RWPE1 (cell line): ENCODE measurements at regions of chr20 and their contacts with region 1.

Region 1: DNA sequence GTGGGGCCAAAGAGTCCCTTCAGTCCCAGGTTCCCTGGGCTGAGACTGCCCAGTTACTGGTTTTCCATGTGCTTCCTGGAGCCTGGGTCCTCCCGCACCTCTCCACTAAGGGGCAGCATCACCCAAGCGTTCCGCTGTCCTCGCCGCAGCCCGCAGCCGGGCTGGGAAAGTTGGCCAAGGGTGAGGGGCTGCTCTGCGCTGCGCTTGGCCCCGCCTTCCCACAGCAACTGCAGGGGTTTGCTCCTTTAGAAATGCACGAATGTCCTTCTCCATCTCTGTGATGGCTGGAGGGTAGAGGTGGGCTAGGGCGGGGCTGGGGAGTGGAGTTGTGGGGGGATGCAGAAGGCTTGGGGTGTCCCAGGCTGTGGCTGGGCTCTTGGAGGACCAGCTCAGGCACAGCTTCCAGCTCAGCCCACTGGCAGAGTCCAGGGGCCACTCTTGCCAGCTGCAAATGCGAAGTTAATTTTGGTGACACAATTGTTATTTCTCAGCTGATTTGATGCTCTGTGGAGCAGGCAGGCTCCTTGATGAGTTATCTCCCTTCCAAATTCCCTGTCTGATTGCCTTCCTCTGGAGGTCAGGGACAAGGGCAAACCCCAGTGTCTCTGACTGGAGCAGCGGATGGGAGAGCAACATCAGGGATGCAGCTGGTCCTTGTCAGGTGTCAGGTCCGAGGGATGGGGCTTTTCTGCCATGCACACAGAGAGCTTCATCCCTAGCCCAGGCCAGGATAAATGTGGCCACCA is 63.2 kb downstream of the NOL4L start:
- DNase-seq: peak; percentile 92
- H3K27ac ChIP-seq: no peak overlapping the region
- CTCF ChIP-seq: peak; percentile 94

Region 2: DNA sequence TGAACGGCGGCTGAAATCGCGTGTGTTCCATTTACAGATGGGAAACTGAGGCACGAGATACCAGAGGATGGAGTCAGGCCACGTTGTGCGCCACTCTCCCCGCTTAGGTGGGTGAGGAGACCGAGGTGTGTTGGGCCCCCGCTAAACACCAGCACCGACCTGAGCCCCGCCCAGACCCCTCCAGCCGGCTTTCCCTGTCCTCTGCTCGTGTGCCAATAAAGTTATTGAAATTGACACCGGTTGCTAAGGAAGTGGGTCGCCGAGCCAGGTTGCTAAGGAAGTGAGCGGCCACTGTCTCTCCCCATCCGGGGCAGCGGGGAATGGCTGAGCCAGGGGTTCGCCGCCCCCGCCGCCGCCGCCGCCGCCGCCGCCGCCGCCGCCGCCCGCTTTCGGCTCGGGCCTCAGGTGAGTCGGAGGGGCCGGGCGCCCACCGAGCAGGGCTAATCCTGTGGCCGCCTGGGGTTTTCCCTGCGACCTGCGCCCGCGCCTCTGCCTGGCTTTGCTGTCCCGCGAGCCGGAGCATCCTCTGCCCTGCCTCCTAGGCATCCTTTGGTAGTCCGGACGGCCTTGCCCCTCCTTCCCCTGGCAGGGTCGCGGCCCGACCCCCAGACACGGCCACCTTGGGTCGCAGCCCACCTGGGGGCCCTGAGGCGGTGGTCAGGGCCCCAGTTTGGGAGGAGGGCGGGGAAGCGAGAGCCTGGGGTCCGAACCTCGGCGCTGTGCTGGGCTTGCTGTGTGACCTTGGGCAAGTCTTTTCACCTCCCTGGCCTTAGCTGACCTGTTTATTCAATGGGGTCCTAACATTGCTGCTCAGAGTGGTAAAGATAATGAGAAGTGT is 244.4 kb before region 1 on chr20 and contains the start of gene KIF3B:
- CTCF ChIA-PET with region 1: no interaction called
- POLR2A ChIA-PET with region 1: no interaction called
- DNase-seq: peak; percentile 99
- H3K27ac ChIP-seq: peak within 1 kb of the TSS; percentile 69
- CTCF ChIP-seq: no peak

Region 3: DNA sequence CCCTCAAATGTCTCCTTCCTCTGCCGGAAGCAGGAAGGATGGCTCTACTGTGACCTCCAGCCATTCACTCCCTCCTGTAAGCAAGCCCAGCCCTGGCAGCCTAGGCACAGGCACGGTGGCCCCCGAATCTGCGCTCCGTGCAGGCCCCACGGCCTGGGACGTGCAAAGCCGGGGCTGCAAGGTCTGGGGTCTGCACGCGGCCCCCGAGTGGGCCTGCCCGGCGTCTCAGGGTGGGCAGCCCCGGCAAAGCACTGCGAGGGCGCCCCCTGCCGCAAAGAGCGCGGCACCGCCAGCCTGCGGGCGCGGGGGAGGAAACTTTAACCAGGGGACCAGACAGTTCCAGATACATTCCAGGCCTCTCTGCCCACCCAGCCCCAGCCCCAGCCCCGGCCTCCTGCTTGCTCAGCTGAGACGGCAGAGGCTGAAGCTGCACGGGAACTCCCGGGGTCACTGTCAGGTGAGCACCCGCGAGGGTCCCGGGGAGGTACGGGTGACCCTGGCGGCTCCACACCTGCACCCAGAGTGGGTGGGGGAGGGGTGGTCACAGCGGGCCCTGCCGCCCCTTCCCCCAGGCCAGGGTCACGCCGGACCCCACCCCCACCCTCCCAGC is 65.0 kb before region 1 on chr20:
- CTCF ChIA-PET with region 1: no interaction called
- POLR2A ChIA-PET with region 1: no interaction called
- DNase-seq: peak; percentile 55
- H3K27ac ChIP-seq: no peak overlapping the region
- CTCF ChIP-seq: peak; percentile 91

Region 4: GRCh38 chr20:32538526-32538939 is 16.6 kb after region 1 on chr20:
- CTCF ChIA-PET with region 1: interaction called, 10 read pairs
- POLR2A ChIA-PET with region 1: no interaction called
- DNase-seq: no peak
- H3K27ac ChIP-seq: no peak overlapping the region
- CTCF ChIP-seq: no peak

Region 5: DNA sequence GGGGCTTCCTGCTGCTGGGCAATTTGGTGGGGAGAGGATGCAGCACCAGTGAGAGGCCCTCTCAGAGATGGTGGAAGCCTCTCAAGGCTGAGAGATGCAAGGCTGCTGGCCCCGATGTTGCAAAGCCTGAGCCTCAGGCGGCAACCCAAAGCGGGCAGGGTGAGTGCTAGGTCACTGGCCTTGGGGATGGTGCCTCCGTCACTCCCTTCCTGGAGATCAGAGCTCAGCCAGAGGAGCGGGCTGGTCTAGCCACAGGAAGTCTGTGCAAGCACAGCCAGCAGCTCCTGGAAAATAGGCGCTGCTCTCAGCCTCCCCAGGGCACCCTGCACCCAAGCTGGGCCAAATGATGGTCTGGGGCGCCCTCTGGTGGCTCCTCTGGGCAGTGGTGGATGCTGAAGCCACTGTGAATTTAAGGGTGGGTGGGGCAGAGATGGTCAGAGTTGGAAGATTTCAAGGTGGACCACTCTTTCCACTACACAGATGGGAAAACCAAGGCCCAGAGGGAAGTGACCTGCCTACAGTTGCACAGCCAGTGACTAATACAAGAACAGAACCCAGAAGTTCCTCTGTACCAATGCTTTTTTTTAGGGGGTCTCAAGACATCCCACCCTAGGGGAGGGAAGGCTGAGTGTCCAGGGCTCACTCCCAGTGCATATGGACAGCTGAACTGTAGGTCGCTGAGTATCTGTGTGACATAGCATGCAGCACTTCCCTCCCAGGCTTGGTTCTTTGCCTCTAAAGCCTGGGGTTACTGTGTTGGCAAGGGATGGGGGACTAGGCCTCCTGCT is 131.0 kb after region 1 on chr20:
- CTCF ChIA-PET with region 1: interaction called, 184 read pairs
- POLR2A ChIA-PET with region 1: no interaction called
- DNase-seq: peak; percentile 95
- H3K27ac ChIP-seq: no peak overlapping the region
- CTCF ChIP-seq: peak; percentile 98

Region 6: GRCh38 chr20:32663335-32664011 is 141.5 kb after region 1 on chr20:
- CTCF ChIA-PET with region 1: interaction called, 13 read pairs
- POLR2A ChIA-PET with region 1: no interaction called
- DNase-seq: no peak
- H3K27ac ChIP-seq: no peak overlapping the region
- CTCF ChIP-seq: no peak